HAP-1 (cell line): ENCODE measurements at regions of chr2 and their contacts with region 1.

Region 1: DNA sequence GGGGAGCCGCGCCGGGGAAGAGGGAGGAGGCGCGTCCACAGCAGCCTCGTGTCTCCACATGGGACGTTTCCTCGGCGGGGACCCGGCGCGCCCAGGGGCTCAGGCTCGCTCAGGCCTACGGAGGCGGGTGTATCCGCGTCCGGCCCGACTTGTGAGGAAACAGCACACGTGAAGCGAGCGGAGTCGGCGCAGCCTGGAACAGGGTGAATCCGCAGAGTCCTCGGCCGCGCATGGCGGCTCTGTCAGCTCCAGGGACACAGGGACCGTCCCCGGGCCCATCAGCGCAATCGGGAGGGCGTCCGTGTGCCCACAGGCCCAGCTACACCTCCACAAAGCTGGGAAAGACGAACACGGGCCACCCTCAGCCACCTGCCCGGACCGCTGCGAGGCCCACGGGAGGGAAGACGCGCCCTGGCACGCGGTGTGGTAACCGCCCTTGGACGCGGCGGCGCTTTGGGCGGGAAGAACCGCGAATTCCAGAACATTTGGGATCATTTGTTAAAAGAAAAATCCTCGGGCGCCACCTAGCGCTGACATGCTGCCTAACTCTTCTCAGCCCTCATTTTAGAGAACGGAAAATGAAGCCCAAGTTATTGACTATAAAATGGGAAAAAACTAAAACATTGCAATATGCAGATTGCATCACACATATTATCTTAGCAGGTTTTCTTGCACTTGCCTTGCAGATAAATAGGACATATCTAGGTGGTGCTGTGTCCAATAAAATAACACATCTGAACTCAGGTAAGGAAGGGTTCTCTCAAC is 40.4 kb downstream of the TMEM18 start:
- DNase-seq: peak; percentile 17 to 83
- H3K4me3 ChIP-seq: no peak overlapping the region
- H3K4me1 ChIP-seq: no peaks in the 10 kb centered on the region
- H3K27me3 ChIP-seq: no peaks in the 10 kb centered on the region

Region 2: DNA sequence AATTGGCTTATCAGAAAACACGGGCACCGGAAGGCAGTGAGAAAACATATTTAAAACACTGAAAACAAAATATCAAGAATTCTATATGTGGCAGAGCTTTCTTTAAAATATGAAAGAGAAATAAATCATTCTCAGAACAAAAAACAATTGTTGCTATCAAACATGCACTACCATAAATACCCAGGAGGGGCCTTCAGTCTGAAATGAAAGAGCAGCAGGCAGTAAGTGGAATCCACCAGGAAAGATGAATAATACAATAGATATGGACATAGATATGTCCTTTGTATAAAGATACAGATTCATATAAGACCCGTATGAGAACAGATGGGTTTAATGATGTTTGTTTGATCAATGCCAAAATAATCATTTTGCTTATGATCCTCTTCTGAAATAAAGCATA is 101.6 kb before region 1 on chr2:
- in situ Hi-C with region 1: loop called (anchors 10 kb)
- DNase-seq: no peak
- H3K4me3 ChIP-seq: no peak overlapping the region
- H3K4me1 ChIP-seq: no peaks in the 10 kb centered on the region
- H3K27me3 ChIP-seq: no peaks in the 10 kb centered on the region